Naive thymus-derived CD4-positive, alpha-beta T cell (primary cell): ENCODE measurements at regions of chr16 and their contacts with region 1.

Region 1: GRCh38 chr16:78770353-78771091 is 671.1 kb downstream of the WWOX start:
- DNase-seq: peak; percentile 21 to 81 (median 52)
- ATAC-seq: peak; percentile 94
- H3K4me3 ChIP-seq: no peak overlapping the region
- H3K4me3 Mint-ChIP-seq: peak overlapping the region in 2 of 10 donors; percentile 4 to 28
- H3K27ac ChIP-seq: no peak overlapping the region
- H3K27ac Mint-ChIP-seq: peak overlapping the region in 5 of 9 donors; percentile 1 to 26 (median 3)
- H3K4me1 ChIP-seq: peaks cover 0 to 21% of the 10 kb centered on the region in 2 donors
- H3K4me1 Mint-ChIP-seq: peaks cover 6 to 23% (median 7%) of the 10 kb centered on the region in 7 donors
- H3K27me3 ChIP-seq: no peaks in the 10 kb centered on the region
- H3K27me3 Mint-ChIP-seq: peaks cover 0 to 5% (median 0%) of the 10 kb centered on the region in 5 donors

Region 2: GRCh38 chr16:78122774-78123315 is 647.7 kb before region 1 on chr16:
- CTCF ChIA-PET with region 1: no interaction called
- POLR2A ChIA-PET with region 1: no interaction called
- intact Hi-C with region 1: loop called in 1 of 2 experiments (anchors 2 kb)
- DNase-seq: peak in 6 of 9 donors; percentile 37 to 64 (median 52)
- ATAC-seq: peak; percentile 85
- H3K4me3 ChIP-seq: no peak overlapping the region
- H3K4me3 Mint-ChIP-seq: peak overlapping the region in 1 of 10 donors; percentile 7
- H3K27ac ChIP-seq: no peak overlapping the region
- H3K27ac Mint-ChIP-seq: peak overlapping the region in 1 of 9 donors; percentile 54
- H3K4me1 ChIP-seq: no peaks in the 10 kb centered on the region
- H3K4me1 Mint-ChIP-seq: peaks cover 2 to 6% (median 4%) of the 10 kb centered on the region in 7 donors
- H3K27me3 ChIP-seq: no peaks in the 10 kb centered on the region
- H3K27me3 Mint-ChIP-seq: no peaks in the 10 kb centered on the region

Region 3: GRCh38 chr16:78503602-78504001 is 266.9 kb before region 1 on chr16:
- CTCF ChIA-PET with region 1: no interaction called
- POLR2A ChIA-PET with region 1: no interaction called
- intact Hi-C with region 1: loop called in 1 of 2 experiments (anchors 1 kb)
- DNase-seq: peak in 7 of 9 donors; percentile 10 to 37 (median 27)
- ATAC-seq: no peak
- H3K4me3 ChIP-seq: no peak overlapping the region
- H3K4me3 Mint-ChIP-seq: no peak overlapping the region
- H3K27ac ChIP-seq: no peak overlapping the region
- H3K27ac Mint-ChIP-seq: no peak overlapping the region
- H3K4me1 ChIP-seq: no peaks in the 10 kb centered on the region
- H3K4me1 Mint-ChIP-seq: no peaks in the 10 kb centered on the region
- H3K27me3 ChIP-seq: no peaks in the 10 kb centered on the region
- H3K27me3 Mint-ChIP-seq: no peaks in the 10 kb centered on the region

Region 4: GRCh38 chr16:78576941-78577340 is 193.6 kb before region 1 on chr16:
- CTCF ChIA-PET with region 1: no interaction called
- POLR2A ChIA-PET with region 1: no interaction called
- intact Hi-C with region 1: no loop called
- DNase-seq: no peak
- ATAC-seq: no peak
- H3K4me3 ChIP-seq: no peak overlapping the region
- H3K4me3 Mint-ChIP-seq: no peak overlapping the region
- H3K27ac ChIP-seq: no peak overlapping the region
- H3K27ac Mint-ChIP-seq: no peak overlapping the region
- H3K4me1 ChIP-seq: no peaks in the 10 kb centered on the region
- H3K4me1 Mint-ChIP-seq: peaks cover 0 to 2% (median 0%) of the 10 kb centered on the region in 7 donors
- H3K27me3 ChIP-seq: no peaks in the 10 kb centered on the region
- H3K27me3 Mint-ChIP-seq: no peaks in the 10 kb centered on the region

Region 5: DNA sequence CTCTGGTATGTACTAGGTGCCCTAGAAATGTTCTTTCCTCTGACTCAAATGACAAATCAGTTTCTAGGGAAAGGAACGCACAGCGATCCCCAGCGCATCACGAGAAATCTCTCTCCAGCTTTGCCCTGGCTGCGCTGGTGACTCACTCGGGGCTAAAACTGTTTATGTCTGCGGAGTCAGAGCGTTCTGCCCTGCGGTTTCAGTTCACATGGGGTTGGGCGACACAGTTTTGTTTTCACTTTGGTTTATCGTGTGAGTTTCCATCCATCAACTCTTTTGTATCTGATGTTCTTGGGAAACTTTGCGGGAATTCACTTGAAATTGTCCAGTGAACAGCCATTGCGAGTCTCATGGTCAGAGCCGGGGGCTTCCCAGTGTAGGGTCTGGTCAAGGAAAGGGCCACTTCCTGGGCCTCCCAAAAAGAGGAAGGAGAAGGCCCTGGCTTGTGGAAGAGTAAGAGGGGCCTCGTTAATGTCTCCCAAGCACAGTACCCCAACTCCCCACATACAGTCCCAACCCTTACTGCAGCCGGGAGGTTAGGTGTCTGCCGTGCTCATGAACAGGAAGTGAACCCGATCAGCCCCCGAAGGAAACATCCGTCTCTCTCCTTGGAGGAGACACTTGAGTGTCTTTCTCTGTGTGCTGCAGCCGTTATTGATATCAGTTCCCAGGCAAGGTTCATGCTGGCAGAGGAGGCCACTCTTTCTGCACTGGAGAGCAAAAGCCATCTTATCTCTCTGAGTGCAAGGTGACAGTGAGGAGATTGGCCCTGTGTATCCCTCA is 27.8 kb before region 1 on chr16:
- CTCF ChIA-PET with region 1: no interaction called
- POLR2A ChIA-PET with region 1: interaction called, 3 read pairs
- intact Hi-C with region 1: loop called in 1 of 2 experiments (anchors 1 kb)
- DNase-seq: peak; percentile 27 to 72 (median 46)
- ATAC-seq: peak; percentile 93
- H3K4me3 ChIP-seq: peak overlapping the region; percentile 62
- H3K4me3 Mint-ChIP-seq: peak overlapping the region; percentile 61 to 84 (median 77)
- H3K27ac ChIP-seq: peak overlapping the region; percentile 73
- H3K27ac Mint-ChIP-seq: peak overlapping the region; percentile 86 to 98 (median 93)
- H3K4me1 ChIP-seq: peaks cover 12 to 22% of the 10 kb centered on the region in 2 donors
- H3K4me1 Mint-ChIP-seq: peaks cover 5 to 23% (median 20%) of the 10 kb centered on the region in 7 donors
- H3K27me3 ChIP-seq: no peaks in the 10 kb centered on the region
- H3K27me3 Mint-ChIP-seq: no peaks in the 10 kb centered on the region

Region 6: GRCh38 chr16:78851266-78851665 is 80.7 kb after region 1 on chr16:
- CTCF ChIA-PET with region 1: no interaction called
- POLR2A ChIA-PET with region 1: no interaction called
- intact Hi-C with region 1: no loop called
- DNase-seq: no peak
- ATAC-seq: no peak
- H3K4me3 ChIP-seq: no peak overlapping the region
- H3K4me3 Mint-ChIP-seq: no peak overlapping the region
- H3K27ac ChIP-seq: no peak overlapping the region
- H3K27ac Mint-ChIP-seq: no peak overlapping the region
- H3K4me1 ChIP-seq: no peaks in the 10 kb centered on the region
- H3K4me1 Mint-ChIP-seq: no peaks in the 10 kb centered on the region
- H3K27me3 ChIP-seq: no peaks in the 10 kb centered on the region
- H3K27me3 Mint-ChIP-seq: no peaks in the 10 kb centered on the region

Region 7: GRCh38 chr16:79071424-79071823 is 300.9 kb after region 1 on chr16:
- CTCF ChIA-PET with region 1: no interaction called
- POLR2A ChIA-PET with region 1: no interaction called
- intact Hi-C with region 1: loop called in 1 of 2 experiments (anchors 10 kb)
- DNase-seq: no peak
- ATAC-seq: no peak
- H3K4me3 ChIP-seq: no peak overlapping the region
- H3K4me3 Mint-ChIP-seq: no peak overlapping the region
- H3K27ac ChIP-seq: no peak overlapping the region
- H3K27ac Mint-ChIP-seq: no peak overlapping the region
- H3K4me1 ChIP-seq: no peaks in the 10 kb centered on the region
- H3K4me1 Mint-ChIP-seq: peaks cover 14 to 53% (median 44%) of the 10 kb centered on the region in 7 donors
- H3K27me3 ChIP-seq: no peaks in the 10 kb centered on the region
- H3K27me3 Mint-ChIP-seq: peaks cover 0 to 11% (median 1%) of the 10 kb centered on the region in 5 donors